ENCODE measurements at regions of chr6 and their contacts with region 1.

Region 1: DNA sequence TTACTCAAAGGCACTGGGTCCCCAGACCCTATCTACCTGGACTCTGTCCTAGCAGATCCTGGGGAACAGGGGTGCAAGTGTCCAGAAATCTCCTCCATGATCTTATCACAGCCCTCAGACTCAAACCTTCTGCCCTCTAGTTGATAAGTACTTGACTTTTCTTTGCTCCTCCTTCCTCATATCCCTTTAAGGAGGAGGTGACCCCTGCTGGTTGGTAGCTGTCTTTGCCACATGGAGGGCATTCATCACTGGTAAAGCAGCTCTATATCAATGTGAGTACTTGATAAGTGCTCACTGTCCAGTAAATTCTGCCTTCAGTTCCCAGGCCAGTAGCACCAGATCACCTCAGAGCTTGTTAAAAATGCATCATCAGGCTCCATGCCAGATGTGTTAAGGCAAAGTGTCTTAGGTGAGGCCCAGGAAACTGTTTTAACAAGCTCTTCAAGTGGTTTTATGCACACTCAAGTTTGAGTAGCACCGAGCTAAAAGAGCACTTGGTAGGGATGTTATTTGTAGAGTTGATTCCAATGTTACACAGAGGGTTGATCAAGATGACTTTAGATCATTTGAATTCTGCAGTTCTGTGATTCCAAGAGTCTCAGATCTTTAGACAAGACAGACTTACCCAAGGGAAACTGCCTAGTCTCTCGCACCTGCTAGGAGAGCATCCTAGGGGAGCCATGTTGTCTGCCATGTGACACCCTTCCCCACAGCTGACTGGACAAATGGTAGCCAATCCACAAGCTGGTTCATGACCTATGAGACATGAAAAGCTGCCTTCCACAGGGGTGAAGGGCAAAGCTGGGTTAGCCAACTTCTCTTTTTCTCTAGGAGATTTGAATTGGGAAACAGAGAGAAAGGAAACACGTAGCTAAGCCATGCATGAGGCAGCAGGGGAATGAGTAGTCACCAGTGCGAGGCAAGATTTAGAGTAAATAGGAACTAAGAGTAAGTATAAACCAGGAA is 18.6 kb downstream of the TREML2 start:
- DNase-seq: peak; percentile 79
- ATAC-seq: peak; percentile 98
- H3K4me3 Mint-ChIP-seq: no peak overlapping the region
- H3K27ac Mint-ChIP-seq: peak overlapping the region; percentile 53
- H3K4me1 Mint-ChIP-seq: peaks cover 40% of the 10 kb centered on the region
- H3K27me3 Mint-ChIP-seq: peaks cover 6% of the 10 kb centered on the region

Region 2: GRCh38 chr6:41066867-41067304 is 115.5 kb before region 1 on chr6:
- CTCF ChIA-PET with region 1: interaction called, 11 read pairs
- POLR2A ChIA-PET with region 1: no interaction called
- DNase-seq: peak; percentile 81
- ATAC-seq: no peak
- H3K4me3 Mint-ChIP-seq: no peak overlapping the region
- H3K27ac Mint-ChIP-seq: no peak overlapping the region
- H3K4me1 Mint-ChIP-seq: peaks cover 37% of the 10 kb centered on the region
- H3K27me3 Mint-ChIP-seq: no peaks in the 10 kb centered on the region

Region 3: GRCh38 chr6:41072676-41073623 is 109.4 kb before region 1 on chr6 and contains the start of gene NFYA:
- CTCF ChIA-PET with region 1: interaction called, 27 read pairs
- POLR2A ChIA-PET with region 1: interaction called, 3 read pairs
- DNase-seq: peak; percentile 100
- ATAC-seq: peak; percentile 80
- H3K4me3 Mint-ChIP-seq: peak within 1 kb of the TSS; percentile 91
- H3K27ac Mint-ChIP-seq: peak within 1 kb of the TSS; percentile 98
- H3K4me1 Mint-ChIP-seq: peaks cover 54% of the 10 kb centered on the region
- H3K27me3 Mint-ChIP-seq: no peaks in the 10 kb centered on the region
- total RNA-seq, gene NFYA: 32.3 to 32.5 TPM

Region 4: DNA sequence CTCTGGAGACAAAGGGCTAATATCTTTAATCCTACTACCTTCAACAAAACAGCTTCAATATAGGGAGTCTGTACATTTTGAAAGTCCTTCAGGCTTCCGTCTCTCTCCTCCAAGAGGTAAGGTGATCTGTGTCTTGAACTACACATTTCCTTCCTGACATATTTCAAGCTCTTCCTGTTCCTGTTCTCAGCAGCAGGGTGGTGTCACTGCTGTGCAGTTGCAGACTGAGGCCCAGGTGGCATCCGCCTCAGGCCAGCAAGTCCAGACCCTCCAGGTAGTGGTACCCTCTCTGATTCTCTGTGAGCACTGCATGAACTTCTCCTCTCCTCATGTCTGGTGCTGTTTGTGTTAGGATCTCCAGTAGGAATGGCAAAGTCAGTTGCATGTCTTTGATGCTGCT is 101.7 kb before region 1 on chr6:
- CTCF ChIA-PET with region 1: interaction called, 27 read pairs
- POLR2A ChIA-PET with region 1: interaction called, 3 read pairs
- DNase-seq: peak; percentile 57
- ATAC-seq: peak; percentile 96
- H3K4me3 Mint-ChIP-seq: peak overlapping the region; percentile 69
- H3K27ac Mint-ChIP-seq: peak overlapping the region; percentile 85
- H3K4me1 Mint-ChIP-seq: peaks cover 60% of the 10 kb centered on the region
- H3K27me3 Mint-ChIP-seq: no peaks in the 10 kb centered on the region

Region 5: DNA sequence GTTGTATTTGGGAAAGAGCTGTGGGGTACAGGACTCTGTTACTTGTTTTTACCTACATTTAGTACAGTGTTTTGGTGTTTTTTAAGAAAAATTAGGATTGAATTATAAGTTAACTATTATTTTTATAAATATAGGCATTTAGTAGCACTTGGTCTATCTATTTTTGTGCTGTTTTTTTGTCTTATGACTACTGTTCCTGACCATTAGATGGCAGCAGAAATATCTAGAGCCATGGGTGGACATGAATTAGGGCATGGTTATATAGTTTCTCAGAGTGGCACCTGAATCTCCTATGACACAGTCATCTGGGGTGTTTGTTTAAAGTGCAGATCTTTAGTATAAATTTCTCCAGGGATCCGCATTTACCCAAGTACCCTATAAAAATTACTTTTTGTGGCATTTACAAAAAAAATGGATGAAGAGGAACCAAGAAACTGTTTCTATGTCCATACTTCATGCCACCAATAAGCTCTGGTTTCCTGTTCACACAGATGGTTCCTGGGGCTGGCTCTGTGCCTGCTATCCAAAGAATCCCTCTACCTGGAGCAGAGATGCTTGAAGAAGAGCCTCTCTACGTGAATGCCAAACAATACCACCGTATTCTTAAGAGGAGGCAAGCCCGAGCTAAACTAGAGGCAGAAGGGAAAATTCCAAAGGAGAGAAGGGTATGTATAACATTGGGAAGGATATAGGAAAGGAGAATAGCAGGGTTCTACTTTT is 89.8 kb before region 1 on chr6:
- CTCF ChIA-PET with region 1: interaction called, 27 read pairs
- POLR2A ChIA-PET with region 1: no interaction called
- DNase-seq: no peak
- ATAC-seq: no peak
- H3K4me3 Mint-ChIP-seq: no peak overlapping the region
- H3K27ac Mint-ChIP-seq: no peak overlapping the region
- H3K4me1 Mint-ChIP-seq: peaks cover 2% of the 10 kb centered on the region
- H3K27me3 Mint-ChIP-seq: no peaks in the 10 kb centered on the region

Region 6: DNA sequence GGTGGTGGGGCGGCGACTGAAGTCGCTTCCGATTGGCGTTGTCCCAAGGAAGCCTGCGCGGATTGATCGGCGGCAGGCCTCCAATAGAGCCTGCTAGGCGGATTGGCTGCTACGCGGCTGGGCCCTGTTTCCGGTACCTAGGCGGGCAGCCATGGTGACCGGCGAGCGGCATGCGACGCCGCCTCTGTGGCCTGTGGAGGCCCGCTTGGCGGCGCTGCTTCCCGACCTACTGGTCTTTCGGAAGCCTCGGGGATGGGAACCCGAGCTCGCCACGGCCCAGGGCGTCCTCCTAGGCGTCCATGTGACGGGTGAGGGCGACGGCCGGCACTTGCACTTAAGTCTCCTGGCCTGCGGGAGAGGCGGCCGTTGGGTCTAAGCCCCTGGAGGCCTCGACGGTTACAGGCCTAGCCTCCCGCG is 81.5 kb before region 1 on chr6:
- CTCF ChIA-PET with region 1: interaction called, 13 read pairs
- POLR2A ChIA-PET with region 1: no interaction called
- DNase-seq: no peak
- ATAC-seq: no peak
- H3K4me3 Mint-ChIP-seq: no peak overlapping the region
- H3K27ac Mint-ChIP-seq: no peak overlapping the region
- H3K4me1 Mint-ChIP-seq: peaks cover 16% of the 10 kb centered on the region
- H3K27me3 Mint-ChIP-seq: no peaks in the 10 kb centered on the region

Region 7: GRCh38 chr6:41200296-41200900 is 18.0 kb after region 1 on chr6:
- CTCF ChIA-PET with region 1: interaction called, 27 read pairs
- POLR2A ChIA-PET with region 1: interaction called, 20 read pairs
- DNase-seq: peak; percentile 78
- ATAC-seq: peak; percentile 66
- H3K4me3 Mint-ChIP-seq: peak overlapping the region; percentile 74
- H3K27ac Mint-ChIP-seq: peak overlapping the region; percentile 98
- H3K4me1 Mint-ChIP-seq: peaks cover 68% of the 10 kb centered on the region
- H3K27me3 Mint-ChIP-seq: no peaks in the 10 kb centered on the region

Region 8: GRCh38 chr6:41226772-41227171 is 44.4 kb after region 1 on chr6:
- CTCF ChIA-PET with region 1: no interaction called
- POLR2A ChIA-PET with region 1: no interaction called
- DNase-seq: no peak
- ATAC-seq: no peak
- H3K4me3 Mint-ChIP-seq: no peak overlapping the region
- H3K27ac Mint-ChIP-seq: no peak overlapping the region
- H3K4me1 Mint-ChIP-seq: peaks cover 4% of the 10 kb centered on the region
- H3K27me3 Mint-ChIP-seq: peaks cover 24% of the 10 kb centered on the region